A549 (cell line): ENCODE measurements at regions of chr16 and their contacts with region 1.

Region 1: DNA sequence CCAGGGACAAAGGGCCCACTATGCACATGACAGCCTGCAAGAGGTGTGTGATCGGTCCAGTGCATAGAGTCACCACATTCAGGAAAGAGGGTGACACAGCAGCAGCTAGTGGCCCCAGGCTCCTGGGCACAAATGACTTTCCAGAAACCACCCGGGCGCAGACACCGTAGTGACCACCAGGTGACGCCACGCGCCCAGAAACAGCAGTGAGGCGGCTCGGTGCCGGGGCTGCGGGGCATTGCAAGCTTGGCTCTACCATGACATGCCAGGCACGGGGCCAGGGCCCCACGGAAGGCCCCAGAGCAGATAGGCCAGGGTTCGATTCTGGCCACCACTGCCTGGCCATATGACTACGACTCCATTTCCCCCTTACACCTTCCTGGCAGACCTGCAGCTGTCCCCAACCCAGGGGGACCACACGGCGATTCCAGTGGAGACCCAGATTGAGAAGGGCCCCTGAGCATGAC is 6.7 kb downstream of the RHBDF1 start:
- DNase-seq: peak; percentile 79 to 90
- ATAC-seq: peak; percentile 76 to 89
- H3K4me3 ChIP-seq: no peak overlapping the region
- H3K27ac ChIP-seq: no peak overlapping the region
- H3K4me1 ChIP-seq: no peaks in the 10 kb centered on the region; the same call in 2 of the 3 replicates
- CTCF ChIP-seq: peak; percentile 92
- EP300 ChIP-seq: no peak
- POLR2A ChIP-seq: no peak
- RAD21 ChIP-seq: peak; percentile 97 to 98

Region 2: GRCh38 chr16:45454-45853 is 20.2 kb before region 1 on chr16:
- CTCF ChIA-PET with region 1: interaction called, 14 read pairs
- POLR2A ChIA-PET with region 1: no interaction called
- DNase-seq: no peak
- ATAC-seq: peak in 1 of 2 experiments; percentile 53; a peak in 1 of 6 replicates
- H3K4me3 ChIP-seq: no peak overlapping the region
- H3K27ac ChIP-seq: no peak overlapping the region
- H3K4me1 ChIP-seq: peaks cover 16% of the 10 kb centered on the region; the same call in 2 of the 3 replicates
- CTCF ChIP-seq: no peak
- EP300 ChIP-seq: no peak
- POLR2A ChIP-seq: no peak
- RAD21 ChIP-seq: no peak

Region 3: GRCh38 chr16:53346-54236 is 12.1 kb before region 1 on chr16 and contains the starts of genes POLR3K and SNRNP25:
- CTCF ChIA-PET with region 1: interaction called, 718 read pairs
- POLR2A ChIA-PET with region 1: interaction called, 3 read pairs
- DNase-seq: peak; percentile 98
- ATAC-seq: peak; percentile 96 to 98
- H3K4me3 ChIP-seq: peak within 1 kb of the TSS; percentile 70
- H3K27ac ChIP-seq: peak within 1 kb of the TSS; percentile 82 to 93
- H3K4me1 ChIP-seq: peaks cover 14% of the 10 kb centered on the region; the same call in 2 of the 3 replicates
- CTCF ChIP-seq: no peak
- EP300 ChIP-seq: no peak
- POLR2A ChIP-seq: peak; percentile 90
- RAD21 ChIP-seq: no peak
- polyA plus RNA-seq, gene POLR3K: 46.9 and 50.9 TPM in 2 replicates
- polyA plus RNA-seq, gene SNRNP25: 43.5 and 45.0 TPM in 2 replicates

Region 4: GRCh38 chr16:352547-353403 is 287.1 kb after region 1 on chr16 and contains the start of gene AXIN1:
- CTCF ChIA-PET with region 1: interaction called, 17 read pairs
- POLR2A ChIA-PET with region 1: no interaction called
- DNase-seq: peak; percentile 59 to 98
- ATAC-seq: peak; percentile 62 to 86
- H3K4me3 ChIP-seq: peak within 1 kb of the TSS; percentile 89
- H3K27ac ChIP-seq: peak within 1 kb of the TSS; percentile 87 to 98
- H3K4me1 ChIP-seq: peaks cover 13% of the 10 kb centered on the region; the same call in 2 of the 3 replicates
- CTCF ChIP-seq: peak; percentile 62
- EP300 ChIP-seq: no peak
- POLR2A ChIP-seq: peak; percentile 64
- RAD21 ChIP-seq: peak; percentile 32 to 65; a peak in 4 of 5 replicates
- polyA plus RNA-seq, gene AXIN1: 8.7 and 8.9 TPM in 2 replicates

Region 5: GRCh38 chr16:370443-370842 is 304.7 kb after region 1 on chr16 and contains the start of gene MRPL28:
- CTCF ChIA-PET with region 1: interaction called, 12 read pairs
- POLR2A ChIA-PET with region 1: no interaction called
- DNase-seq: peak; percentile 90 to 94
- ATAC-seq: peak; percentile 84 to 96
- H3K4me3 ChIP-seq: peak within 1 kb of the TSS; percentile 58
- H3K27ac ChIP-seq: peak within 1 kb of the TSS; percentile 68 to 89
- H3K4me1 ChIP-seq: peaks cover 17% of the 10 kb centered on the region; the same call in 2 of the 3 replicates
- CTCF ChIP-seq: no peak
- EP300 ChIP-seq: no peak
- POLR2A ChIP-seq: peak; percentile 20; the same call in 1 of the 2 replicates
- RAD21 ChIP-seq: no peak
- polyA plus RNA-seq, gene MRPL28: 115 and 130 TPM in 2 replicates